Calu3 (cell line): ENCODE measurements at regions of chr11 and their contacts with region 1.

Region 1: DNA sequence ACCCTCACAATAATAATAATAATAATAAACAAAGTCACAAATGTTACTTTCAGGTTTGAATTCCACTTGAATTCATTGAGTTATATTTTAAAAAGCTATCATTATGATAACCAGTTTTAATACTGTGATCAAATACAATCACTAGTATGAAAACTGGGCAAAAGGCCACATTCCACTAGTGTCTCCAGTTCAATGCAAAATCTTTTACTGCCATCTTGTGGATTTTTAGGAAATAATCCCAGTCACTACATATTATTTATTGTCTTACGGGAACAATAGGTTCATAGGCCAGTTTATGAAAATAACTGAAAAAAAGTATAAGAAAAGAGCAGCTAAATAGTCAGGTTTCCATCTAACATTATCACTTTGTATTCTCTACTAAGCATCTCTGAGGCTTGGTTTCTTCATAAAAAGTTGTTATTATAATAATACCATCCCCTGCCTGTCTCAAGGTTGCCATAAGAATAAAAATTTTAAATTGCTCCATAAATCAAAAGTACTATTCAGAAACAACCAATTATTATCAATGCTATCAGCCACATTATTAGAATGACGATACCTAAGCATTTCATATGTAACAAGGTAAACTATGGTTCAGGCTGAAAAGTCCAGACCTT is 533.9 kb upstream of the CCDC90B start:
- DNase-seq: no peak
- H3K4me3 Mint-ChIP-seq: no peak overlapping the region
- H3K27ac Mint-ChIP-seq: no peak overlapping the region
- H3K4me1 Mint-ChIP-seq: no peaks in the 10 kb centered on the region
- H3K27me3 Mint-ChIP-seq: peaks cover 30% of the 10 kb centered on the region
- CTCF ChIP-seq: peak; percentile 34

Region 2: GRCh38 chr11:82906244-82906654 is 913.8 kb before region 1 on chr11:
- CTCF ChIA-PET with region 1: interaction called, 6 read pairs
- intact Hi-C with region 1: loop called (anchors 5 kb)
- DNase-seq: no peak
- H3K4me3 Mint-ChIP-seq: no peak overlapping the region
- H3K27ac Mint-ChIP-seq: no peak overlapping the region
- H3K4me1 Mint-ChIP-seq: peaks cover 16% of the 10 kb centered on the region
- H3K27me3 Mint-ChIP-seq: no peaks in the 10 kb centered on the region
- CTCF ChIP-seq: peak; percentile 21

Region 3: GRCh38 chr11:83241291-83241946 is 578.6 kb before region 1 on chr11:
- CTCF ChIA-PET with region 1: no interaction called
- intact Hi-C with region 1: loop called (anchors 2 kb)
- DNase-seq: peak; percentile 52
- H3K4me3 Mint-ChIP-seq: no peak overlapping the region
- H3K27ac Mint-ChIP-seq: no peak overlapping the region
- H3K4me1 Mint-ChIP-seq: peaks cover 9% of the 10 kb centered on the region
- H3K27me3 Mint-ChIP-seq: no peaks in the 10 kb centered on the region
- CTCF ChIP-seq: no peak

Region 4: GRCh38 chr11:83292709-83293456 is 527.2 kb before region 1 on chr11:
- CTCF ChIA-PET with region 1: interaction called, 8 read pairs
- intact Hi-C with region 1: loop called (anchors 1 kb)
- DNase-seq: peak; percentile 28
- H3K4me3 Mint-ChIP-seq: no peak overlapping the region
- H3K27ac Mint-ChIP-seq: no peak overlapping the region
- H3K4me1 Mint-ChIP-seq: no peaks in the 10 kb centered on the region
- H3K27me3 Mint-ChIP-seq: peaks cover 62% of the 10 kb centered on the region
- CTCF ChIP-seq: peak; percentile 32